ENCODE measurements at regions of chr11 and their contacts with region 1.

Region 1: GRCh38 chr11:33452836-33453624 is 195.8 kb downstream of the HIPK3 start:
- DNase-seq: peak; percentile 90
- ATAC-seq: peak; percentile 72
- H3K4me3 ChIP-seq: no peak overlapping the region
- H3K27ac ChIP-seq: peak overlapping the region; percentile 86
- H3K4me1 ChIP-seq: peaks cover 53% of the 10 kb centered on the region
- H3K27me3 ChIP-seq: no peaks in the 10 kb centered on the region
- CTCF ChIP-seq: no peak

Region 2: GRCh38 chr11:33362051-33362910 is 90.7 kb before region 1 on chr11:
- CTCF ChIA-PET with region 1: no interaction called
- POLR2A ChIA-PET with region 1: no interaction called
- intact Hi-C with region 1: no loop called
- DNase-seq: peak; percentile 71
- ATAC-seq: peak; percentile 53
- H3K4me3 ChIP-seq: no peak overlapping the region
- H3K27ac ChIP-seq: no peak overlapping the region
- H3K4me1 ChIP-seq: no peaks in the 10 kb centered on the region
- H3K27me3 ChIP-seq: no peaks in the 10 kb centered on the region
- CTCF ChIP-seq: peak; percentile 76

Region 3: GRCh38 chr11:33376331-33377310 is 76.4 kb before region 1 on chr11:
- CTCF ChIA-PET with region 1: interaction called, 3 read pairs
- POLR2A ChIA-PET with region 1: interaction called, 6 read pairs
- intact Hi-C with region 1: loop called (anchors 5 kb)
- DNase-seq: no peak
- ATAC-seq: peak; percentile 25
- H3K4me3 ChIP-seq: peak overlapping the region; percentile 70
- H3K27ac ChIP-seq: no peak overlapping the region
- H3K4me1 ChIP-seq: peaks cover 48% of the 10 kb centered on the region
- H3K27me3 ChIP-seq: no peaks in the 10 kb centered on the region
- CTCF ChIP-seq: no peak

Region 4: DNA sequence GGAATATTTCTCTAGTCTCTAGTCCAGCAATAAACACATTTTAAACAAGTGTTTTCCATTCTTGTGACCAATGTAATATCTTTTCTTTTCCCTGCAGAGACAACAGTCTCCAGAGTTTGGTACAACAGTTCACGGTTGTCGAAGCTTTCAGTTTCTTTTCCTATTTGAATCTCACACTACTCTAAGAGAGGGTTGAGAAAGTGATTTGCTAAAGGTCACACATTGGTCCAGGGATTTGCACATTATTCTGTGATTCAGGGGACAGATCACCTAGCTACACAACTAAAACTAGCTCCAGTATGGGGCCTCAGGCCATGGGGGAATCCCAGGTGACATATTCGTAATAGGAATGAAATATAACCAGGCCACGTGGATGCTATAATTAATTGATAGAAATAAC is 63.4 kb before region 1 on chr11:
- CTCF ChIA-PET with region 1: no interaction called
- POLR2A ChIA-PET with region 1: no interaction called
- intact Hi-C with region 1: loop called (anchors 5 kb)
- DNase-seq: no peak
- ATAC-seq: no peak
- H3K4me3 ChIP-seq: no peak overlapping the region
- H3K27ac ChIP-seq: no peak overlapping the region
- H3K4me1 ChIP-seq: peaks cover 17% of the 10 kb centered on the region
- H3K27me3 ChIP-seq: no peaks in the 10 kb centered on the region
- CTCF ChIP-seq: no peak

Region 5: DNA sequence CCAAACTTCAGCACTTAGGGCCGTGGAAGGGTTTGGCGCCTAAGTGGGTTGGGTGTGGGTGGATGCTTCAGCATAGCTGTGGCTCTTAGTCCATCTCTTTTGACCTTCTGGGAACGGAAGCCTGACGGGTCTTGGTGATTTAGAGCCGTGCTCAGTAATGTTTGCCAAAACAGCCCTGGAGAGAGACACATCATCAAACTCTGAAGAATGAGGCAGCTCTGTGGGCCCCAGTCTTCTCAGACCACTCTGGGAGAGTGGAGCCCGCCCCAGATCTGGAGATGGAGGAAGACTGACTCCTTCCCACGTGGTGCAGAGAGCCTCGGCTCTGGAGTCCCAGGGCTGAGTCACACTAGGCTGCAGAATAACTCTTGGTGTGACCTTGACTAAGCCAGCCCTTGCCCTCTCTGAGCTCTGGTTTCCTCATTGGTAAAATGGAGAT is 78.7 kb after region 1 on chr11:
- CTCF ChIA-PET with region 1: no interaction called
- POLR2A ChIA-PET with region 1: no interaction called
- intact Hi-C with region 1: loop called (anchors 5 kb)
- DNase-seq: no peak
- ATAC-seq: no peak
- H3K4me3 ChIP-seq: no peak overlapping the region
- H3K27ac ChIP-seq: no peak overlapping the region
- H3K4me1 ChIP-seq: peaks cover 22% of the 10 kb centered on the region
- H3K27me3 ChIP-seq: no peaks in the 10 kb centered on the region
- CTCF ChIP-seq: no peak

Region 6: GRCh38 chr11:33633241-33633901 is 180.3 kb after region 1 on chr11:
- CTCF ChIA-PET with region 1: no interaction called
- POLR2A ChIA-PET with region 1: no interaction called
- intact Hi-C with region 1: loop called (anchors 5 kb)
- DNase-seq: peak; percentile 89
- ATAC-seq: peak; percentile 77
- H3K4me3 ChIP-seq: peak overlapping the region; percentile 51; the same call in 1 of the 2 replicates
- H3K27ac ChIP-seq: peak overlapping the region; percentile 88
- H3K4me1 ChIP-seq: peaks cover 45% of the 10 kb centered on the region
- H3K27me3 ChIP-seq: no peaks in the 10 kb centered on the region
- CTCF ChIP-seq: no peak

Region 7: GRCh38 chr11:34825670-34826383 is 1372.8 kb after region 1 on chr11:
- CTCF ChIA-PET with region 1: no interaction called
- POLR2A ChIA-PET with region 1: no interaction called
- intact Hi-C with region 1: no loop called
- DNase-seq: peak; percentile 85
- ATAC-seq: peak; percentile 71
- H3K4me3 ChIP-seq: no peak overlapping the region
- H3K27ac ChIP-seq: peak overlapping the region; percentile 99
- H3K4me1 ChIP-seq: peaks cover 30% of the 10 kb centered on the region
- H3K27me3 ChIP-seq: no peaks in the 10 kb centered on the region
- CTCF ChIP-seq: no peak